ENCODE measurements at regions of chr9 and their contacts with region 1.

Region 1: DNA sequence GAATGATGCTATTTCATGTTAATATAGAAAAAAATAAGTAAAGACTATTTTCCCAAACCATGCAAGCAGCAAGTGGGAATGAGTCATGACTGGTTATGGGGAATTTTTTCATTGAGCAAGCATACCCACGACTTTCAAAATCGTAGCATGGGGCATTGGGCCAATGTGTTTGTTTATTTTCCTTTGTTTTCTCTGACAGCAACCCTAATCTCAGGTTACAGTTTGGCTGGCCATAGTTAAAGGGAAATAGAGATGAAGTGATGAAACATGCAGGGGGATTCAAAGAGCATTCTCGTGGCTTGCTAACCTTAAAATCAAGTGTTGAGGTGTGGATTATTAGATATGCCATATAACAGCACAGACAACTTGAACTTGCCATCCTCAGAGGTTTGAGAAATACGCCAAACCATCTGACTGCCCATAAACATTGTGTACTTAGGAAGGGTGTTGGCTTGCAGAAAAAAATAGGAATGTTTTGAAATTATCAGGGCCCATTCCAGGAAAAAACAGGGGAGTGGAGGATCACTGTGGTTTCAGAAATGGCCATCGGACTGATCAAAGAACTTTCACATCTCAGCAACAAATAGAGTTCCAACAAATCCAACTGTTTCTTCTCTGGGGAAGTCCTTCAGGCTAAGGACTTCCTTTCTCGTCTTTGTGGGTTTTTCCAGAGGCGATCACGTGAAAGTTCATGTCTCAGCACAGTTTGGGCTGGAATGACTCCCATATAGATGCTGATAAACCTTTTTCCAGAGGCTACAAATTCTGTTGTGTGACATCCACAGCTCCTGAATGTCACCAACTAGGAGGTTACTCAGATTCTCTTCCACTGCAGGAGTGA is 259.1 kb downstream of the SYK start:
- DNase-seq: peak; percentile 94
- ATAC-seq: peak; percentile 75
- H3K4me3 ChIP-seq: peak overlapping the region; percentile 14; the same call in 1 of the 2 replicates
- H3K27ac ChIP-seq: peak overlapping the region; percentile 86
- H3K4me1 ChIP-seq: peaks cover 25% of the 10 kb centered on the region
- H3K27me3 ChIP-seq: no peaks in the 10 kb centered on the region
- CTCF ChIP-seq: no peak

Region 2: GRCh38 chr9:90991953-90992352 is 68.8 kb before region 1 on chr9:
- CTCF ChIA-PET with region 1: no interaction called
- POLR2A ChIA-PET with region 1: no interaction called
- intact Hi-C with region 1: loop called (anchors 2 kb)
- DNase-seq: peak; percentile 58
- ATAC-seq: peak; percentile 72
- H3K4me3 ChIP-seq: 0 out of 2 replicates have a peak overlapping the region, but pooled peaks have one; percentile 2
- H3K27ac ChIP-seq: peak overlapping the region; percentile 98
- H3K4me1 ChIP-seq: peaks cover 20% of the 10 kb centered on the region
- H3K27me3 ChIP-seq: no peaks in the 10 kb centered on the region
- CTCF ChIP-seq: no peak

Region 3: GRCh38 chr9:91047529-91047928 is 13.2 kb before region 1 on chr9:
- CTCF ChIA-PET with region 1: no interaction called
- POLR2A ChIA-PET with region 1: no interaction called
- intact Hi-C with region 1: no loop called
- DNase-seq: no peak
- ATAC-seq: no peak
- H3K4me3 ChIP-seq: no peak overlapping the region
- H3K27ac ChIP-seq: no peak overlapping the region
- H3K4me1 ChIP-seq: peaks cover 18% of the 10 kb centered on the region
- H3K27me3 ChIP-seq: no peaks in the 10 kb centered on the region
- CTCF ChIP-seq: no peak

Region 4: DNA sequence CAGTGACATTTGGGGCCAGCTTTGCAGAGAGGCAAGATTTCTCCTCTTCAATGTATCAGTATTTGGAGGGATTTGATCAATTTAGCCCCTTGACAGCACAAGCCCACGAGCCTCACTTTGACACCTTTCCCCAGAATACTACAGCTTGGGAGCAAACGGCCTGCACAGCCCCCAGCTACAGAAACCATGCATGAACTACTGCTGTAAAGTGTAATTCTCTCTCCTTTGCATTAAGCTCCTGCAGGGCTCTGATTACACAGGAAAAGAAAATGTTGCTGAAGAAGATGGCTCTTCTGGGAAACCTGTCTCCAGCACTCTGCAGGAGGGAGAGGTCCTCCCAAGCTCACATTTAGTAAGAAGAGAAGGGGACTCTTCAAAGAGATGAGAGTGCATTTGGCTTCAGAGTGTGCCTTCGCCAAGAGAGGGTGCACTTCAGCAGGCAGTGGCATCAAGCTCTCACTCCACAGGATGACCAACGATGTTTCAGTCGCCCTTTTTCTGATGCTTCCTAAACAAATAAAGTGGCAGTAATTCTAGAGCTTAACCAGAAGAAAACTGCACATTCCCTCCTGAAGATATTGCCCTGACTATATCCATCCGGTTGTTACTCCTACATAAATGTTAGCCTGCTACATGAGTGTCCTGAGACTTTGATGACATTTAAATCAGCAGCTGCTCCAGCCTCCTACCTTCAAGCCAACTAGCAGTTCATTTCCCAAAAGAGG is 28.8 kb after region 1 on chr9:
- CTCF ChIA-PET with region 1: interaction called, 4 read pairs
- POLR2A ChIA-PET with region 1: no interaction called
- intact Hi-C with region 1: loop called (anchors 1 kb)
- DNase-seq: peak; percentile 64
- ATAC-seq: peak; percentile 96
- H3K4me3 ChIP-seq: no peak overlapping the region
- H3K27ac ChIP-seq: 0 out of 2 replicates have a peak overlapping the region, but pooled peaks have one; percentile 6
- H3K4me1 ChIP-seq: no peaks in the 10 kb centered on the region
- H3K27me3 ChIP-seq: no peaks in the 10 kb centered on the region
- CTCF ChIP-seq: peak; percentile 67

Measured in PC-3 (cell line).